ENCODE measurements at regions of chr17 and their contacts with region 1.

Region 1: DNA sequence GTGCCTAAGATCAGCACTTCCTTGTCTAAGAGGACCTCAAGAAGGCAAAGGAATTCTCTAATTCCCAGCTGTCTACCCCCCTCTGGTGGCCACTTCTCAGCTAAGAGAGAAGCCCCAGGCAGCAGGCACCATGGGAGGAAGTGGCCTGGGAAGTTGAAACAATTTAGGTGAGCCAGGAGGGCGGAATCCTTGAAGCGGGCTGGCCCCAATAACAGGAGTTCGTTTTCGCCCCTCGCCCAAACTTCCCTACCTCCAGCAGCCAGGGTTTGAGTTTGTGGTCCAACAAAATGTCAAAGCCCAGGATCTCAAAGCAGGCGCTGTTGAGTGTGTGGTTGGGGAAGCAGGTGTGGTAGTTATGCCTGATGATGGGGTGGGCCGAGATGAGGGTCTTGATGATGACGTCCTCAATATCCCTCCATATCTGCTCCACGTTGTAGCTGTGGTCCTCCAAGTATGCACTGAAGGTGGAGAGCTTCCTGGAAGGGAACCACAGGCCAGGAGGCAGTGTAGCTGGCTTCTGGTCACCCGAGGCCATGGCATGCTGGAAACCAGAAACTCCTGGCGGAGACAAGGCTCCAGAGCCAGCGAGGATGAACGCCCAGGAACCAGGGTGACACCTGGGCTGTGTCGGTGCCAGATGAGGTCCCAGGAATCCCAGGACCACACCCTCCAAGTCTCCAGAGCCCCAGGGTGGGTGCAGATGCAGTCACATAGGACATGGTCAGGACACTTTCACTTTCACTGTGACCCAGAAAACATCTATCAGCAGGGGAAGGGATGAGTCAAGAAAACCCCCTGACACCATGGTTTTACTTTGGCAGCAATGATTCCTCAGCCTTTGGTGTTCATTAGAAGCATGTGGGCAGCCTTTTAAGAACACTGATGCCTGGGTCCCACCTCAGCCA is 25.6 kb downstream of the TTLL6 start:
- DNase-seq: peak in 1 of 2 donors; percentile 79
- H3K4me3 ChIP-seq: no peak overlapping the region
- H3K27ac ChIP-seq: no peak overlapping the region
- H3K4me1 ChIP-seq: no peaks in the 10 kb centered on the region
- H3K27me3 ChIP-seq: no peaks in the 10 kb centered on the region
- CTCF ChIP-seq: peak; percentile 58 to 74 (median 60)

Region 2: DNA sequence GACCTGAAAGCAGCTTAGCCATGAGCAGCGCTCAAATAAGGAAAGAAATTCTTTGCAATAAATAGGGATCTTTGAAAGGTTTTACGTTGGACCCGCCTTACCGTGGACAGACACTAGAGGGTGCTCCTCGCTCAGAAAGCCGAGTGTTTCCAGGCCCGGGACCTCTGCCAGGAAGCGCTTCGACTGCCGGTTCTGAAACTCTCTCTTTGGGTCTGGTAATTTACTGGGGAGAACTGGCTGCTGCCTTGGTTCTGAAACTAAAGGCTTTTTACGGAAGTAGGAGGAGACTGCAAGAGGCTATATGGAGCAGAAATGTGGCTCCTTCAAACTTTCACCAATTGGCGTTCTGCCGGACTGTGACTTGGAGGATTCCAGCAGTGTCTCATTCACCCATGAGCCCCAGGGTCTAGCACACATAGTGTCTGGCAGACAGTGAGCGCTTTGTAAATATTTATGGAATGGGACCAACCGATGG is 119.6 kb before region 1 on chr17:
- intact Hi-C with region 1: loop called (anchors 2 kb)
- DNase-seq: peak in 1 of 2 donors; percentile 87
- H3K4me3 ChIP-seq: peak overlapping the region in 1 of 2 donors; percentile 42
- H3K27ac ChIP-seq: no peak overlapping the region
- H3K4me1 ChIP-seq: peaks cover 0 to 3% of the 10 kb centered on the region in 2 donors
- H3K27me3 ChIP-seq: no peaks in the 10 kb centered on the region
- CTCF ChIP-seq: peak; percentile 70 to 91 (median 87)

Region 3: GRCh38 chr17:48724251-48725003 is 67.0 kb before region 1 on chr17:
- intact Hi-C with region 1: loop called (anchors 2 kb)
- DNase-seq: peak in 1 of 2 donors; percentile 89
- H3K4me3 ChIP-seq: peak overlapping the region in 1 of 2 donors; percentile 19
- H3K27ac ChIP-seq: no peak overlapping the region
- H3K4me1 ChIP-seq: peaks cover 6 to 11% of the 10 kb centered on the region in 2 donors
- H3K27me3 ChIP-seq: peaks cover 65% of the 10 kb centered on the region
- CTCF ChIP-seq: peak; percentile 53 to 77 (median 62)

Measured in ascending aorta (tissue), 2 donors.